B cell (primary cell): ENCODE measurements at regions of chr17 and their contacts with region 1.

Region 1: GRCh38 chr17:51153210-51154072 is at the start of gene NME1:
- DNase-seq: peak; percentile 98
- ATAC-seq: peak; percentile 88
- H3K4me3 ChIP-seq: peak within 1 kb of the TSS; percentile 55 to 86 (median 81)
- H3K4me3 Mint-ChIP-seq: no peak within 1 kb of the TSS
- H3K27ac ChIP-seq: peak within 1 kb of the TSS; percentile 68 to 83
- H3K27ac Mint-ChIP-seq: no peak within 1 kb of the TSS
- H3K4me1 ChIP-seq: peaks cover 16 to 23% of the 10 kb centered on the region in 2 donors
- H3K4me1 Mint-ChIP-seq: peaks cover 7% of the 10 kb centered on the region
- H3K27me3 ChIP-seq: no peaks in the 10 kb centered on the region
- H3K27me3 Mint-ChIP-seq: no peaks in the 10 kb centered on the region
- CTCF ChIP-seq: peak; percentile 86
- total RNA-seq, gene NME1: 19.0 and 20.5 TPM in 2 replicates

Region 2: DNA sequence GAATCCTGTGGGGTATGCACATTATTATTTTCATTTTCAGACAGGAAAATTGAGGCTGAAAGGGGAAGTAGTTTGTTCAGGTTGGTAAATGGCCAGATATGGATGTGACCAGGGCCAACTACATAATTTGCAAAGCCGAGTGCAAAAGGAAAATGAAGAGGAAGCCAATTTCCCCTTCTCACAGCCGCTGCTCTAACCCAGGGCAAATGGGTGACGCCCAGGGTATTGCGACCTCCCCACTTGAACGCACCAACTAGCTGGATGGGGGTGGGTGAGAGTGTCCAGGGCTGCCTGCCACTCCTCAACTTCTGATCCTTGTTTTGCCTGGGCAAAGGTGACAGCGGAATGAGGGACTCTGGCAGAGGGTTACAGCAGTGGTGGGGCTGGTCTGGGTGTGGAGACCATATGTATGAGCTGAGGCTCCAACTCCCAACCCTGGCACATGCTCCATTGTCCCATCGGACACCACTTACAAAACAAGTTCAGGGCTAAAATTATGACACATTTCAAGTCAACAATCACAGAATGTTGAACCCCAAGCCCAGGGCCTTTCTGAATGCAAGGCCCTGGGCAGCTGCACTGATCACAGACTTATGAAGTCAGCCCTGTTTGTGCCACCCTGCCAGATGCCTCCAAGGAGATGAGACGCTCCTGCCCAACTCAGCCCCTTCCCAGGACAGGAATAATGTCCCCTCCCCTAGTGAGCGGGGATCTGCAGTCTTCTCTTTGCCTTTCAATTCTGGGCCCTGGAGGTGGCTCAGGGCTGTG is 387.8 kb before region 1 on chr17:
- CTCF ChIA-PET with region 1: interaction called, 3 read pairs
- POLR2A ChIA-PET with region 1: no interaction called
- intact Hi-C with region 1: loop called (anchors 1 kb)
- DNase-seq: peak; percentile 53
- ATAC-seq: peak; percentile 50
- H3K4me3 ChIP-seq: peak overlapping the region in 1 of 5 experiments; percentile 15
- H3K4me3 Mint-ChIP-seq: peak overlapping the region; percentile 59
- H3K27ac ChIP-seq: peak overlapping the region; percentile 15 to 35
- H3K27ac Mint-ChIP-seq: peak overlapping the region; percentile 70
- H3K4me1 ChIP-seq: peaks cover 32 to 36% of the 10 kb centered on the region in 2 donors
- H3K4me1 Mint-ChIP-seq: peaks cover 37% of the 10 kb centered on the region
- H3K27me3 ChIP-seq: no peaks in the 10 kb centered on the region
- H3K27me3 Mint-ChIP-seq: no peaks in the 10 kb centered on the region
- CTCF ChIP-seq: no peak

Region 3: DNA sequence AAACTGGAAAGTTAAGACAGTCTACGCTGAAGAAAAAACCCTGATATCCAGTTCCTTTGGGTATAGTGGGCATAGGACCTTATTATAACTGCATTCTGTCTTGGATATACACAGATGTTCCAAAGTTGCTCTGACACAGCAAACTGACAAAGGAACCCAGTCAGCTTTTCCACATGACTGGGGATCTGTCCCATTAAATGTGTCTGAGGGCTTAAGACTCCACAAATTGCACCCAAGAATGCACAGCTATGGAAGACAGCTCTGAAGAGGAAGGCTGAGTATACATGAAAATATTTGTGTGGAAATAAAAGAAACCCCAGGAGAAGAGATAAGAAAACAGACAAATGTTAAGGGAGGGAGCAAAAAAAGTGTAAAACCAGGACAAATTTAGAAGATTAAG is 146.8 kb before region 1 on chr17:
- CTCF ChIA-PET with region 1: interaction called, 97 read pairs
- POLR2A ChIA-PET with region 1: no interaction called
- intact Hi-C with region 1: loop called (anchors 1 kb)
- DNase-seq: no peak
- ATAC-seq: no peak
- H3K4me3 ChIP-seq: no peak overlapping the region
- H3K4me3 Mint-ChIP-seq: no peak overlapping the region
- H3K27ac ChIP-seq: no peak overlapping the region
- H3K27ac Mint-ChIP-seq: no peak overlapping the region
- H3K4me1 ChIP-seq: no peaks in the 10 kb centered on the region
- H3K4me1 Mint-ChIP-seq: no peaks in the 10 kb centered on the region
- H3K27me3 ChIP-seq: no peaks in the 10 kb centered on the region
- H3K27me3 Mint-ChIP-seq: no peaks in the 10 kb centered on the region
- CTCF ChIP-seq: no peak

Region 4: DNA sequence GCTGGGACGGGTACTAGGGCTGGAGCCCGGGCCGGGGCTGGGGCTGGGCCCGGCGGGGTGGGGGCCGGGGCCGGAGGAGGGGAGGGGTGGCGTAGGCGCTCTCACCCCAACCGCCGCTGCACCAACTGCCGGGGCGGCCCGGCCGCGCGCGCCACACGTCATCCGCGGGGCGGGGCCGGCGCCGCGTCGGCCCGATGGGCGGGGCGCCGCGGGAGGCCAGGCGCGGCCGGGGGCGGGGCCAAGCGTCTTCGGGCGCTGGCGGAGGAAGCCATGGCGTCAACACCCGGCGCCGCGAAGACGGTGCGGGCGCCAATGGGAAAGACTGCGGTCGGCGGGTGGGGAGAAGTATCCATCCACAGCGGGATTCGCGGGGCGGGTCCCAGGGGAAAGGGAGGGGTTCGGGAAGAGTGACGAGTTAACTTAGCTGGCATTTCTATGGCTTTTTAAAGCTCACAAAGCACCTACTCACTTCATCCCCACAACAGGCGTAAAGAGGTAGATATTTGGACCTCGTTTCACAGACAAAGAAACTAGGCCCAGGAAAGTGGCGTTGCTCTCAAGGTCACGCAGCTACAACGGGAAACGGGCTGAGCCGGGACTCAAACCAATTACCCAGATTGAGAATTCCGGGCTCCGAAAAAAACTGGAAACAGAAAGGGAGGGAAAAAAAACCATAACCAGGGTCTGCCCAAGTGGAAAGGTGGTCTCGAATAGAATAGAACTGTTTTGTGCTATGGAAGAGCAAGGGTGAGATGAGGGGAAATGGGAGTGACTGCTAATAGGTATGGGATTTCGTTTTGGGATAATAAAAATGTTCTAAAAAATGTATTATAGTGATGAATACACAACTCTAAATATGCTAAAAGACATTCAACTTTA is 32.5 kb before region 1 on chr17 and contains the start of gene SPAG9:
- CTCF ChIA-PET with region 1: interaction called, 10 read pairs
- POLR2A ChIA-PET with region 1: interaction called, 10 read pairs
- intact Hi-C with region 1: loop called (anchors 1 kb)
- DNase-seq: peak; percentile 96
- ATAC-seq: peak; percentile 84
- H3K4me3 ChIP-seq: peak within 1 kb of the TSS; percentile 74 to 98 (median 89)
- H3K4me3 Mint-ChIP-seq: peak within 1 kb of the TSS; percentile 98
- H3K27ac ChIP-seq: peak within 1 kb of the TSS; percentile 93 to 94
- H3K27ac Mint-ChIP-seq: peak within 1 kb of the TSS; percentile 99
- H3K4me1 ChIP-seq: peaks cover 33 to 35% of the 10 kb centered on the region in 2 donors
- H3K4me1 Mint-ChIP-seq: peaks cover 49% of the 10 kb centered on the region
- H3K27me3 ChIP-seq: no peaks in the 10 kb centered on the region
- H3K27me3 Mint-ChIP-seq: no peaks in the 10 kb centered on the region
- CTCF ChIP-seq: no peak
- total RNA-seq, gene SPAG9: 64.1 and 69.3 TPM in 2 replicates

Region 5: GRCh38 chr17:51260125-51260880 is 106.9 kb after region 1 on chr17 and contains the start of gene UTP18:
- CTCF ChIA-PET with region 1: interaction called, 3 read pairs
- POLR2A ChIA-PET with region 1: interaction called, 4 read pairs
- intact Hi-C with region 1: loop called (anchors 1 kb)
- DNase-seq: peak; percentile 99
- ATAC-seq: peak; percentile 85
- H3K4me3 ChIP-seq: peak within 1 kb of the TSS; percentile 86 to 97 (median 92)
- H3K4me3 Mint-ChIP-seq: peak within 1 kb of the TSS; percentile 98
- H3K27ac ChIP-seq: peak within 1 kb of the TSS; percentile 96 to 98
- H3K27ac Mint-ChIP-seq: peak within 1 kb of the TSS; percentile 99
- H3K4me1 ChIP-seq: peaks cover 26 to 36% of the 10 kb centered on the region in 2 donors
- H3K4me1 Mint-ChIP-seq: peaks cover 54% of the 10 kb centered on the region
- H3K27me3 ChIP-seq: no peaks in the 10 kb centered on the region
- H3K27me3 Mint-ChIP-seq: no peaks in the 10 kb centered on the region
- CTCF ChIP-seq: no peak
- total RNA-seq, gene UTP18: 34.2 and 37.7 TPM in 2 replicates